ENCODE measurements at regions of chr11 and their contacts with region 1.

Region 1: DNA sequence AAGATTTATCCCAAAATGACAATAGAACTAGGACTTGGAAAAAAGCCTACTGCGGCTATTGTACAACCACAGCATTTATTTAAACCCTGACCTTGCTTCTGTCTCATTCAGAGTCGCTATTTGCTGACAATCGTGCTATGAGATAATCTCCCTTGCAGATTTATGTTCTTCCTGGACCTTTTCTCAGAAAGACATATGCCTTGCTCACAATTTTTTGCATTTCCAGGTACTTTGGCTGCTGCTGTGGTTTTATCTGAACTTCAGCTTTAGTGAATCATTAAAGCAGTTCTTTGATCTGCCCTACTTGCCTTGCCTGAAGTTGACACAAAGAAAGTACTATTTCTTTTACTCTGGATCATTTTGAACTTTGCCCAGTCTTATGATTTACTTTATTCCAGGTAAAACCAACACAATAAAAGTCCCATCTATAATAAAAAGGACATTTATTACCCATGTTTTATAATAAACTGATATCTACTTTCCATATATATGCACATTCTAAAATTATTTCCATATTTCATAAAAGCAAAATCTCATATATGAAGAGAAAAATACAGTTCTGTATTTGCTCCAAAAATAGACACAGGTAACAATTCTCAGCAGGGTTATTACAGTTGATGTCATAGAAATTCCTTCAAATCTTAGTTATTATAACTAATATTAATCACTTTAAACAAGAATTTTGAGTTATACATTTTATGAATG is 63.4 kb upstream of the CARD18 start:
- DNase-seq: peak; percentile 80 to 84
- H3K4me3 ChIP-seq: no peak overlapping the region
- H3K4me3 Mint-ChIP-seq: peak overlapping the region; percentile 48
- H3K27ac Mint-ChIP-seq: peak overlapping the region; percentile 80
- H3K4me1 ChIP-seq: peaks cover 61% of the 10 kb centered on the region
- H3K4me1 Mint-ChIP-seq: peaks cover 28% of the 10 kb centered on the region
- H3K27me3 ChIP-seq: no peaks in the 10 kb centered on the region
- H3K27me3 Mint-ChIP-seq: no peaks in the 10 kb centered on the region
- CTCF ChIP-seq: no peak

Region 2: DNA sequence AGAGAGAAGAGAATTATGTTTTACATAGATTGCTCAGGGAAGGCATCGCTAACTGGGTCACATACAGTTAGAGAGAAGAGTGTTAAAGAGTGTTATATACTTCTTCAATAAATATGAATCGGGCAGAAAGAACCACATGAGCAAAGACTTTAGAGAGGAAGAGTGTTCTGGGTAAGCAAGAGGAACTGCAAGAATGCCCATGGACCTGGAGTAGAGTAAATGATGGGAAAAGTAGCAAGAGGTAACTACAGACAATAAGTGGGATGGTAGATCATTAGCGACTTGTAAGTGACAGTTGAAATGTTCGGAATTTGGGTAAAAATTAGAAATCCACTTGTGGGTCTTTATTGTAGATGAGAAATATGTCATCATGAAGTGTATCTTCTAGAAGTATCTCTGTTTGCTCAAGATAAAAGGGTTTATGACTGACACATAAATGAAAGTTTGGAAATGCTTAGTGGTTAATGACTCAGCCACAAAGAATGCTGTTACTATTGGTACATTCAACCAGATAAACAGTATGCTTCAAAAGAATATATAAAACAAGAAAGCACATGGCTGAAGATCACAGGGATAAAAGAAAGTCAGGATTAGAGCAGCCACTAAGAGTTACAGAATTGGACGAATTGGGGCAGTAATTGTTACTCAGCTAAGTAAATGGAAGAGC is 534.1 kb before region 1 on chr11:
- CTCF ChIA-PET with region 1: no interaction called
- POLR2A ChIA-PET with region 1: no interaction called
- intact Hi-C with region 1: loop called (anchors 2 kb)
- DNase-seq: peak in 1 of 2 experiments; percentile 82
- H3K4me3 ChIP-seq: no peak overlapping the region
- H3K4me3 Mint-ChIP-seq: peak overlapping the region; percentile 20
- H3K27ac Mint-ChIP-seq: peak overlapping the region; percentile 74
- H3K4me1 ChIP-seq: peaks cover 47% of the 10 kb centered on the region
- H3K4me1 Mint-ChIP-seq: peaks cover 51% of the 10 kb centered on the region
- H3K27me3 ChIP-seq: no peaks in the 10 kb centered on the region
- H3K27me3 Mint-ChIP-seq: no peaks in the 10 kb centered on the region
- CTCF ChIP-seq: no peak

Region 3: DNA sequence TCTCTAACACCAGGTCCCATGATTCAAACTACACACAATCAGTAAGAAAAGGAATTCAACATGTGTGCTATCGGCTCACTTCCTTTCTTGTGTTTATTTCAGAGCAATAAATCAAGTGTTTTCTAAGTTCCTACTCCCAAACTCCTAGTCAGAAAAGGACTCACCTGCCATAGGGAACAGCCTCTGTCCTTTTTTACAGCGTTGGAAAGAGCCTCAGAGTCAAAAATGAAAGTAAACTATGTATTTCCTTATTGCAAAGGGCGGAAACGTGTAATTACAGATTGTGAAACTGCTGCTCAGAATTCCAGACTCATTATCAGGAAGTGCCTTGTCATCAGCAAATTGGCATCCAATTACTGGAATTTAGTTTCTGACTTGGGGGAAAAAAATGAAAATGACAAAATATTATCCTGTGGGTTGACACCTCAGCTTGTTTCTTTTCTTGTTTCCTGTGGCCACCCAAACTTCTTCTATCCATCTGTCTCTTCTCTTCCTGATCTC is 234.6 kb before region 1 on chr11 and contains the start of gene CASP4:
- CTCF ChIA-PET with region 1: no interaction called
- POLR2A ChIA-PET with region 1: no interaction called
- intact Hi-C with region 1: loop called (anchors 1 kb)
- DNase-seq: peak in 1 of 2 experiments; percentile 39
- H3K4me3 ChIP-seq: peak within 1 kb of the TSS; percentile 35
- H3K4me3 Mint-ChIP-seq: peak within 1 kb of the TSS; percentile 73
- H3K27ac Mint-ChIP-seq: peak within 1 kb of the TSS; percentile 85
- H3K4me1 ChIP-seq: peaks cover 30% of the 10 kb centered on the region
- H3K4me1 Mint-ChIP-seq: peaks cover 47% of the 10 kb centered on the region
- H3K27me3 ChIP-seq: no peaks in the 10 kb centered on the region
- H3K27me3 Mint-ChIP-seq: no peaks in the 10 kb centered on the region
- CTCF ChIP-seq: no peak
- total RNA-seq, gene CASP4: 41.7 and 42.0 TPM in 2 replicates

Region 4: DNA sequence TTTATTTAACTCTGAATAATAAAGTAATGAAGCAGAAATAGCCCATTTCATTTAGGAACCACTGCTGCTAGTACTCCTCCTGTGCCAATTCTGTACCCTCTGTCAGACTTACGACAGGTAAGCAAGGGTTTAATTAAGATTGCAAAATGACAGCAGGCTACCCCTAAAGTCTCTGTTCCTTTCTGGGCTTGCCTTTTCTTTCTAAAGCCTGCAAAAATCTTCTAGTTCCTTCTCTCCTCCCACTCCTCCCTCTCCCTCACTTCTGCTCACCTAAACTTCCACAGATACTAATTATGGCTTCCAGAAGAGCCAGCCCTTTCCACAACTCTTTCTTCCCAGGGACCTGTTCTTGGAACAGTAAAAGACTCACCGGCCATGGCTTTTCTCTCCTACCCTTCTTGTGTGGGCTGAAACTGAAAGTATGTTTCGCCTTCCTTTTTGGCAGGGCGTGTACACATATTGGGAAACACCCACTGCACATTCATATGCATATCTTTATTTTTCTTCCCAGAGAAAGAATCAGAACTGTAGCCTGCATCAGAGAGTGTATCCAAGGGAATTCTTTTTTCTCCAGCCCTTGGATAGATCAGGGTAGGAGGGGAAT is 158.0 kb before region 1 on chr11 and contains the start of gene CARD16:
- CTCF ChIA-PET with region 1: no interaction called
- POLR2A ChIA-PET with region 1: no interaction called
- intact Hi-C with region 1: loop called (anchors 2 kb)
- DNase-seq: no peak
- H3K4me3 ChIP-seq: no peak within 1 kb of the TSS
- H3K4me3 Mint-ChIP-seq: no peak within 1 kb of the TSS
- H3K27ac Mint-ChIP-seq: peak within 1 kb of the TSS; percentile 56
- H3K4me1 ChIP-seq: peaks cover 42% of the 10 kb centered on the region
- H3K4me1 Mint-ChIP-seq: peaks cover 66% of the 10 kb centered on the region
- H3K27me3 ChIP-seq: no peaks in the 10 kb centered on the region
- H3K27me3 Mint-ChIP-seq: no peaks in the 10 kb centered on the region
- CTCF ChIP-seq: no peak
- total RNA-seq, gene CARD16: 0.77 and 1.5 TPM in 2 replicates

Region 5: DNA sequence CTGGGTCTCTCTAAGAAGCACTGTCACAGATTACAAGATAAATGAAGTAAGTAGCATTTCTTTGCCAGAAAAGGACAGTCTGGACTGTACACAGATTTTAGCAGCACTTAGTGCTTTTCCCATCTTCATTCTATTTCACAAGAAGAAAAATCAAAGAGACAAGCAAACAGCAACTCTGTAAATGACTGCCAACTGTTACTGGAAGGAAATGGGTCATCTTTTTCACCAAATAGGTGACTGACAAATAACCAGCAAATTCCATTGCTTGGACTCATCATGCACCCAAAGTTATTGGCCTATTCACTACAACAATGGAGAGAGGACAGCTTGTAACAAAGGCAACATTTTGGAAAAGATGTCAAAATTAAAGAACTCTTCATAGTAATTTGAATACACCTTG is 34.5 kb before region 1 on chr11:
- CTCF ChIA-PET with region 1: no interaction called
- POLR2A ChIA-PET with region 1: no interaction called
- intact Hi-C with region 1: no loop called
- DNase-seq: no peak
- H3K4me3 ChIP-seq: no peak overlapping the region
- H3K4me3 Mint-ChIP-seq: no peak overlapping the region
- H3K27ac Mint-ChIP-seq: no peak overlapping the region
- H3K4me1 ChIP-seq: no peaks in the 10 kb centered on the region
- H3K4me1 Mint-ChIP-seq: no peaks in the 10 kb centered on the region
- H3K27me3 ChIP-seq: no peaks in the 10 kb centered on the region
- H3K27me3 Mint-ChIP-seq: no peaks in the 10 kb centered on the region
- CTCF ChIP-seq: no peak

Region 6: GRCh38 chr11:105315287-105315686 is 112.3 kb after region 1 on chr11:
- CTCF ChIA-PET with region 1: no interaction called
- POLR2A ChIA-PET with region 1: no interaction called
- intact Hi-C with region 1: loop called (anchors 5 kb)
- DNase-seq: peak in 1 of 2 experiments; percentile 39
- H3K4me3 ChIP-seq: no peak overlapping the region
- H3K4me3 Mint-ChIP-seq: no peak overlapping the region
- H3K27ac Mint-ChIP-seq: no peak overlapping the region
- H3K4me1 ChIP-seq: no peaks in the 10 kb centered on the region
- H3K4me1 Mint-ChIP-seq: no peaks in the 10 kb centered on the region
- H3K27me3 ChIP-seq: no peaks in the 10 kb centered on the region
- H3K27me3 Mint-ChIP-seq: no peaks in the 10 kb centered on the region
- CTCF ChIP-seq: peak in 1 of 2 experiments; percentile 58

Region 7: GRCh38 chr11:105862736-105863367 is 659.9 kb after region 1 on chr11:
- CTCF ChIA-PET with region 1: no interaction called
- POLR2A ChIA-PET with region 1: no interaction called
- intact Hi-C with region 1: loop called (anchors 10 kb)
- DNase-seq: peak in 1 of 2 experiments; percentile 50
- H3K4me3 ChIP-seq: no peak overlapping the region
- H3K4me3 Mint-ChIP-seq: no peak overlapping the region
- H3K27ac Mint-ChIP-seq: no peak overlapping the region
- H3K4me1 ChIP-seq: no peaks in the 10 kb centered on the region
- H3K4me1 Mint-ChIP-seq: no peaks in the 10 kb centered on the region
- H3K27me3 ChIP-seq: no peaks in the 10 kb centered on the region
- H3K27me3 Mint-ChIP-seq: peaks cover 2% of the 10 kb centered on the region
- CTCF ChIP-seq: peak; percentile 77 to 84

Region 8: GRCh38 chr11:106159836-106160235 is 956.8 kb after region 1 on chr11:
- CTCF ChIA-PET with region 1: no interaction called
- POLR2A ChIA-PET with region 1: no interaction called
- intact Hi-C with region 1: no loop called
- DNase-seq: no peak
- H3K4me3 ChIP-seq: no peak overlapping the region
- H3K4me3 Mint-ChIP-seq: no peak overlapping the region
- H3K27ac Mint-ChIP-seq: no peak overlapping the region
- H3K4me1 ChIP-seq: peaks cover 5% of the 10 kb centered on the region
- H3K4me1 Mint-ChIP-seq: peaks cover 16% of the 10 kb centered on the region
- H3K27me3 ChIP-seq: no peaks in the 10 kb centered on the region
- H3K27me3 Mint-ChIP-seq: no peaks in the 10 kb centered on the region
- CTCF ChIP-seq: no peak

Measured in Caco-2 (cell line).